ENCODE measurements at regions of chr9 and their contacts with region 1.

Region 1: DNA sequence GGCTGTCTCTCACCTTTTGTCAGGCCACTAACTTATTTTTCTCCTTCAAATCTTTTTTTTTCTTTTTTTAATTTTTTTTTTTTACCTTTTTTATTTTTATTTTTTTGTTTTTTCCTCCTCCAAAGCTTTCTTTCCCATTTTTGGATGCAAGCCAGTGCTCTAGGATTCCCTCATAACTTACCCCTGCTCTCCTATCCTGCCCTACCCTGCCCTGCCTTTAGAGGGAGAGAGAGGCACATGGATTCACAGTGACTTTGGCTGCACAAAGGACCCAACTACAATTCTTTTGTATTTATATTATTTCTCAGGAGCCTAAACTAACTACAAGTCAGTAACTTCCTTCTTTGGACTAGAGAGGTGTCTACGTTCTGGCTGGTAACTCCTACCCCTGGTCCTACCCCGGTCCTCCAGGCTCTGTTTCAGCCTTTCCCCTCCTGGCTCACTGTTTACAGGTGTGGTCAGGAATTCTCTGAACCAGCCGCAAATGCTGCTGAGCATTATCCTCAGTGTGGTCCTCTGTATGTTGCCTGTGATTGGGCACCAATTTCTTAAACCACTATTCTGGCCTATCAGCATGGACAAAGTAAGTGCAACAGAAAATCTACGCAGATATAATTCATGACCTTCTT is 8.4 kb upstream of the RUSC2 start:
- DNase-seq: peak; percentile 56
- H3K4me3 ChIP-seq: no peak overlapping the region
- H3K27ac ChIP-seq: no peak overlapping the region
- H3K4me1 ChIP-seq: no peaks in the 10 kb centered on the region
- H3K27me3 ChIP-seq: no peaks in the 10 kb centered on the region
- CTCF ChIP-seq: peak; percentile 95 to 97

Region 2: GRCh38 chr9:34899535-34900158 is 581.8 kb before region 1 on chr9:
- CTCF ChIA-PET with region 1: interaction called, 4 read pairs
- dilution Hi-C with region 1: no loop called
- in situ Hi-C with region 1: loop called (anchors 10 kb)
- intact Hi-C with region 1: loop called (anchors 1 kb)
- DNase-seq: peak; percentile 60
- H3K4me3 ChIP-seq: no peak overlapping the region
- H3K27ac ChIP-seq: no peak overlapping the region
- H3K4me1 ChIP-seq: no peaks in the 10 kb centered on the region
- H3K27me3 ChIP-seq: peaks cover 2% of the 10 kb centered on the region
- CTCF ChIP-seq: peak; percentile 74 to 89

Region 3: DNA sequence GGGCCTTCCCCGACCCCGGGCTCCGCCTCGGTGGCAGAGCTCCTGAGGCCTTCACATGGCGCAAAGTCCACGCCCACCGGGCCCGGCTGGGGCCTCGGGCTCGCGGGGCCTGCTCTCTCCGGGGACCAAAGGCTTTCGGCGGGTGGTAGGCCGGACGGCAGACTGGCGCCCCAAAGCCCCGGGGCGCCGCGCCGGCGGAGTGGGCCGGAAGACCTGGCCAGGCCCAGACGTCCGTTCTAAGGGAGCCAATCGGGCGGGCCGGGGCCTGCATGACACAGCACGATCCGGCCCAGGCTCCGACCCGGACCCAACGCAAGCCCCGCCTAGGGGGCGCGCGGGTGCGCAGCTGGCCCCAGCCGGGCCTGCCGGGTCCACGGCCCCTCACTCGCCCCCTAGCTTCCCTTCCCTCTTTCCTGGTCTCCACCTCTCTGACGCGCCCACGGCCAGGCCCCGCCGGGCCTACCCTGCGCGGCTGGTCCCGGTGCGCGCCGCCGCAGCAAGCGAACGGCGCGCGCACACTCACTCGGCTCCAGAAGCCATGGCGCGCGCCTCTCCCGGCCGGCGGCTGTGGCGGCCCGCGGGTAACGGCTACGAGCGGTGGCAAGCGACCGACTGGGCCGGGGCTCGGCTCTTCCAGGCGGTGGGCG is 409.5 kb before region 1 on chr9:
- CTCF ChIA-PET with region 1: no interaction called
- dilution Hi-C with region 1: no loop called
- in situ Hi-C with region 1: no loop called
- intact Hi-C with region 1: loop called (anchors 1 kb)
- DNase-seq: peak; percentile 86
- H3K4me3 ChIP-seq: peak overlapping the region; percentile 92 to 95 (median 94)
- H3K27ac ChIP-seq: peak overlapping the region; percentile 92
- H3K4me1 ChIP-seq: peaks cover 34% of the 10 kb centered on the region
- H3K27me3 ChIP-seq: no peaks in the 10 kb centered on the region
- CTCF ChIP-seq: peak in 1 of 2 donors; percentile 38

Region 4: DNA sequence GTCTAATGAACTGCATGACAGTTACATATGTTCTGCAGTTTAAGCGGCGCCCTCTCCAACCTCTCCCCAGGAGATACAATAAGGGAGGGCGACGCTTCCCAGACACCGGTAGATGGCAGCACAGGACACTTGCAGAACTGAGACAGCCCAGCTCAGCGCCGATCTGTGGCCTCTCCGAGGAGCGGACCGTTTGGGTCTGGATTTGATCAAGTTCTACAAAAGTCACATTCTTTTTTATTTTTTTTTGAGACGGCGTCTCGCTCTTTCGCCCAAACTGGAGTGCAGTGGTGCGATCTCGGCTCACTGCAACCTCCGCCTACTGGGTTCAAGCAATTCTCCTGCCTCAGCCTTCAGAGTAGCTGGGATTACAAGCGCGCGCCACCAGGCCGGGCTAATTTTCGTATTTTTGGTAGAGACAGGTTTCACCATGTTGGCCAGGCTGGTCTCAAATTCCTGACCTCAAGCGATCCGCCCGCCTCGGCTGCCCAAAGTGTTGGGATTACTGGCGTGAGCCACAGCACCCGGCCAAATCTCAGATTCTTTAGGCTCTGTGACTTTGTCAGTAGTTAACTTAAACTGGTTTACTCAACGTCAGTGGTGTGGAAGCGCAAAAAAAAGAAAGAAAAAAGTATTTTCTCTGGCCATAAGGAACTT is 364.4 kb before region 1 on chr9:
- CTCF ChIA-PET with region 1: interaction called, 9 read pairs
- dilution Hi-C with region 1: no loop called
- in situ Hi-C with region 1: loop called (anchors 5 kb)
- intact Hi-C with region 1: loop called (anchors 1 kb)
- DNase-seq: peak; percentile 84
- H3K4me3 ChIP-seq: peak overlapping the region; percentile 44 to 84 (median 60)
- H3K27ac ChIP-seq: no peak overlapping the region
- H3K4me1 ChIP-seq: peaks cover 23% of the 10 kb centered on the region
- H3K27me3 ChIP-seq: no peaks in the 10 kb centered on the region
- CTCF ChIP-seq: peak; percentile 95 to 99

Region 5: GRCh38 chr9:35508069-35508468 is 26.6 kb after region 1 on chr9:
- CTCF ChIA-PET with region 1: no interaction called
- dilution Hi-C with region 1: no loop called
- in situ Hi-C with region 1: no loop called
- intact Hi-C with region 1: no loop called
- DNase-seq: no peak
- H3K4me3 ChIP-seq: no peak overlapping the region
- H3K27ac ChIP-seq: no peak overlapping the region
- H3K4me1 ChIP-seq: peaks cover 15% of the 10 kb centered on the region
- H3K27me3 ChIP-seq: no peaks in the 10 kb centered on the region
- CTCF ChIP-seq: no peak

Region 6: DNA sequence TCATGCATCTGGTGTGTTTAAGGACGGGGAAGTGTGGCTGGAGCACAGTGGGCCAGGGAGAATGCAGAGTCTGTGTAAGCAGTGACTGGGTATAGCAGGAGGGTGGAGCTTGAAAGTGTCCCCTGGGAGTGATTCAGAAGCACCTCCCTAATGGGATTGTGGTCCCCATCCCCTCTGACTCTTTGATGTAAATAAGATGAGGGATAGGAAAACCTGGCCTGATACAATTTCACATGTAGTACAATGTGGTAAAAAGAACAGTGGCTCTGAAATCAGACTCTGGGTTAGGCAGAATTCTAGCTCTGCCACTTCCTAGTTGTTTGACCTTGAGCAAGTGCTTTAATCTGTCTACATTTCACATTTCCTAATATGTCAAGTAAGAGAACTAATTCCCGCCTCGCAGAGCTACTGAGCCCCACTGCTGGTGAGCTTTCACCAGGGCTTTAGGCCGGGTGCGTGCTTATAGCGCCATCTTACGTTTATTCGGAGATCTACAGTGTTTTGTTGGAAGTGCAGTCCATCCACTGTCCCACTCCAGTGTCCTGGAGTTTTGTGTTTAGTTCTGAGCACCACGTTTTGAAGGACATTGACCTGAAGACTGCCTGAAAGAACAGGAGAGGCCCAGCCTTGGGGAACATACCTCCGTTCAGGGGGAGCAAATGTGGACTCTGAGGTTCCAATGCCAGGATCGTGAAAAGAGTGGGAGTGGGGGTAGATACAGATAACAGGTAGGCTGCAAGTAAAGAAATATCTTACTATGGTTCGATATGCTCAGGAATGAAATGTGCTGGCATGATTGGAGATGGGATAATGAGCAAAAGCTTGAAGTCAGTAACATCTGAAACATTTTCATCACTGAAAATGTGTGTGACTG is 72.4 kb after region 1 on chr9:
- CTCF ChIA-PET with region 1: interaction called, 10 read pairs
- dilution Hi-C with region 1: no loop called
- in situ Hi-C with region 1: loop called in 1 of 2 experiments (anchors 5 kb)
- intact Hi-C with region 1: loop called (anchors 1 kb)
- DNase-seq: peak; percentile 47
- H3K4me3 ChIP-seq: no peak overlapping the region
- H3K27ac ChIP-seq: no peak overlapping the region
- H3K4me1 ChIP-seq: peaks cover 7% of the 10 kb centered on the region
- H3K27me3 ChIP-seq: no peaks in the 10 kb centered on the region
- CTCF ChIP-seq: peak; percentile 88 to 91

Region 7: DNA sequence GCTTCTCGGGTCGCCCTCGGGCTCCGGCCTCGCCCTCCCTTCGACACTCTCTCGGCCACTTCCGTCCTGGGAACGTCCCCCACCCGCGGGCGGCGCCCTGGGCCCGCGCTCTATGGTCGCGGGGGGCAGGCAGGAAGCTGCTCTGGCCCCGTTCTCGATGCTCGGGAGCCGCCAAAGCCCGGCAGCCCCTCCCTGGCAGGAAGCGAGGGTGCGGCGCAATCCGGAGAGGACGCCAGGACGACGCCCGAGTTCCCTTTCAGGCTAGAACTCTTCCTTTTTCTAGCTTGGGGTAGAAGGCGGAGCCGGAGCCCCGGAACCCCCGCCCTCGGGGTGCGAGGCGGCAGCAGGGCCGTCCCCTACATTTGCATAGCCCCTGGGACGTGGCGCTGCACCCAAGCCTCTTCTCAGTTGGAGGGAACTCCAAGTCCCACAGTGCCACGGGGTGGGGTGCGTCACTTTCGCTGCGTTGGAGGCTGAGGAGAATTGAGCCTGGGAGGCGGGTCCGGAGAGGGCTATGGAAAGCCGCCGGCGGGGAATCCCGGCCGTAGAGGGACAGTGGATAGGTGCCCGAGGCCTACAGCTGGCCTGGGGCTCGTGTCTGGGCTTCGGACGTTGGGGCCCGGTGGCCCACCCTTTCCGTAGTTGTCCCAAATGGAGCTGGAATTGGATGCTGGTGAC is 250.8 kb after region 1 on chr9 and contains the starts of genes CREB3 and TLN1:
- CTCF ChIA-PET with region 1: no interaction called
- dilution Hi-C with region 1: no loop called
- in situ Hi-C with region 1: no loop called
- intact Hi-C with region 1: loop called (anchors 5 kb)
- DNase-seq: peak; percentile 99
- H3K4me3 ChIP-seq: peak within 1 kb of the TSS; percentile 72 to 88 (median 80)
- H3K27ac ChIP-seq: peak within 1 kb of the TSS; percentile 74
- H3K4me1 ChIP-seq: peaks cover 52% of the 10 kb centered on the region
- H3K27me3 ChIP-seq: no peaks in the 10 kb centered on the region
- CTCF ChIP-seq: no peak
- total RNA-seq, gene CREB3: 45.4 to 60.8 TPM
- total RNA-seq, gene TLN1: 202 to 213 TPM